Caco-2 (cell line): ENCODE measurements at regions of chrX and their contacts with region 1.

Region 1: DNA sequence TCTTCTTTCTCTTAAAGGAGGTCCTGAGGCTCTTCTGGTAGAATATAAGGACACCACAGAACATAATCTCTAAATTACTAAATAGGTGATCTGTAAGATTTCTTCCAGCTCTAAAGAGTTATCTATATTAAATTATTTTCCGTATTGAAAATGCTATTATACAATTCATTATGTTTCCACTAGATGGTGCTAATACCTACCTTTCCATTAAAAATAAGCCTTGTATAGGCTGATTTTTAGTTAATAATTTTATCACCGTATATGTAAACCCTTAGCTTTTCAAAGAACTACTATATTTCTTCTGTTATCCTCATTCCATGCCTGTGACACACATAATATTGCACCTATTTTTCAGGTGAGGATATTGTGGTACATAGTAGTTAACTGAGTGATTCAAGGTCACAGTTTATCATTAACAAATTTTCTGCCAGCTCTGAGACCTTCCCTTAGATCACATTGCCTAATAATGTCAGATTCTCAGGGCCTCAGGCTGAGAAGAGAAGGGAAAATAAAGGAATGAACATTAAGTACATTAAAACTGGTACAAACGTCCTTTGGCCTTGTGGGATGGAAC is 138.8 kb downstream of the TEX11 start:
- DNase-seq: no peak
- H3K4me3 ChIP-seq: no peak overlapping the region
- H3K4me3 Mint-ChIP-seq: no peak overlapping the region
- H3K27ac Mint-ChIP-seq: no peak overlapping the region
- H3K4me1 ChIP-seq: no peaks in the 10 kb centered on the region
- H3K4me1 Mint-ChIP-seq: no peaks in the 10 kb centered on the region
- H3K27me3 ChIP-seq: no peaks in the 10 kb centered on the region
- H3K27me3 Mint-ChIP-seq: no peaks in the 10 kb centered on the region
- CTCF ChIP-seq: peak in 1 of 2 experiments; percentile 30

Region 2: DNA sequence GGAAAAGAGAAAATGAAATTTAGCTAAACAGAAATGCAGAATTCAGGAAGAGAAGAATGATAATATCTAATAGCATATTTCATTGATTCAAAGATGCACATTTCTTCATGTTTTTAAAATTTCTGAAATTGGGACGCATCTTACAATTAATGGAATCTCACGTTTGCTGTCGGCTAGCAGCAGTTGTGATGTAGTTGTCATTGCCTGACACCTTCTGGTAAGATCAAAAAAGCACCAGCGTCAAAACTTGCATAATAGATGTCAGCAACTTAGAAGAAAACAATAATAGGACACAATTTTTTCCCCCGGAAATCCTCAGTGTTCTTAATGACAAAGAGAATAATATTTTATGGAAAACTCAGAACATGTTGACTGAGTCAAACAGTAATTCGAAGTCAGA is 191.0 kb after region 1 on chrX:
- CTCF ChIA-PET with region 1: interaction called, 3 read pairs
- POLR2A ChIA-PET with region 1: no interaction called
- intact Hi-C with region 1: loop called (anchors 2 kb)
- DNase-seq: peak in 1 of 2 experiments; percentile 3
- H3K4me3 ChIP-seq: no peak overlapping the region
- H3K4me3 Mint-ChIP-seq: no peak overlapping the region
- H3K27ac Mint-ChIP-seq: no peak overlapping the region
- H3K4me1 ChIP-seq: no peaks in the 10 kb centered on the region
- H3K4me1 Mint-ChIP-seq: peaks cover 9% of the 10 kb centered on the region
- H3K27me3 ChIP-seq: no peaks in the 10 kb centered on the region
- H3K27me3 Mint-ChIP-seq: peaks cover 4% of the 10 kb centered on the region
- CTCF ChIP-seq: no peak